Left cardiac atrium (tissue), 4 donors: ENCODE measurements at regions of chr4 and their contacts with region 1.

Region 1: GRCh38 chr4:80072744-80073472 is at the start of gene ANTXR2:
- DNase-seq: peak; percentile 94
- ATAC-seq: peak; percentile 96 to 97
- total RNA-seq, gene ANTXR2: 39.3 to 49.8 TPM

Region 2: DNA sequence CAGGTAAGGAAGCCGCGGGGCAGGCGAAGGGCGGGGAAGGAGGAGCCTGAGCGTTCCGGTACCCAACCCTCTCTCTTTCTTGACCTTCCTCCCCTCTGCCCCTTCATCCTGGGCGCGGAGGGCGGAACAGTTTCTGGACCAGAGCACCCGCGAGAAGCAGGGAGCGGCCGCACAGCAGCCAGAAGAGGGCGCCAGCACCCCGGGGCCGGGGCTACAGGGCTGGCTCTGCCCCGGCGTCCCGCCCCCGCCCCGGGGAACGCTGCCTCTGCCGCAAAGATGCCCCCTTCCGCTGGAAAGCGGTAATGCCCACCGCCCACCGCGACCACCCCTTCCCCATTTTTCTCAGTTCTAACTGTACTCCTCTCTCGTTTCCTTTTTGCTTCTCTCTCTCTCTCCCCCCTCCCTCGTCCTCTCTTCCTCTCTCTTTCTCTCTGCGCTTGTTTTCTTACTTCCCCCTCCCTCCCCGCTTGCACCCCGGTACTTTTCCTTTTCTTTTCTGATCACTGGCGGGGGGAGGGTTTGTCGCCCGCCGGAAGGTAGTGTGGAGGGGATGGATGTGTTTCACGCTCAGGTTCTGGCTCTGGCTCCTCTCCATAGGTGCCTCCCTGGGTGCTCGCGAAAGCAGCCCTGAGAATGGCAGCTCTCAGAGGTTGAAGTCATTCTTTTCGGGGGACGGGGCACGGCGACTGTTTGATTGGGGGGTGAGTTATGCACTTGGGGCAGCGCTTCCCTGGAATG is 111.3 kb after region 1 on chr4:
- intact Hi-C with region 1: loop called (anchors 10 kb)
- DNase-seq: peak; percentile 90
- ATAC-seq: peak; percentile 97

Region 3: GRCh38 chr4:80454040-80454439 is 381.1 kb after region 1 on chr4:
- intact Hi-C with region 1: no loop called
- DNase-seq: no peak
- ATAC-seq: no peak